ENCODE measurements at regions of chr5 and their contacts with region 1.

Region 1: GRCh38 chr5:62729675-62730074 is 151.1 kb downstream of the LRRC70 start:
- H3K4me3 Mint-ChIP-seq: no peak overlapping the region
- H3K27ac Mint-ChIP-seq: no peak overlapping the region
- H3K4me1 Mint-ChIP-seq: peaks cover 51% of the 10 kb centered on the region
- H3K27me3 Mint-ChIP-seq: no peaks in the 10 kb centered on the region

Region 2: DNA sequence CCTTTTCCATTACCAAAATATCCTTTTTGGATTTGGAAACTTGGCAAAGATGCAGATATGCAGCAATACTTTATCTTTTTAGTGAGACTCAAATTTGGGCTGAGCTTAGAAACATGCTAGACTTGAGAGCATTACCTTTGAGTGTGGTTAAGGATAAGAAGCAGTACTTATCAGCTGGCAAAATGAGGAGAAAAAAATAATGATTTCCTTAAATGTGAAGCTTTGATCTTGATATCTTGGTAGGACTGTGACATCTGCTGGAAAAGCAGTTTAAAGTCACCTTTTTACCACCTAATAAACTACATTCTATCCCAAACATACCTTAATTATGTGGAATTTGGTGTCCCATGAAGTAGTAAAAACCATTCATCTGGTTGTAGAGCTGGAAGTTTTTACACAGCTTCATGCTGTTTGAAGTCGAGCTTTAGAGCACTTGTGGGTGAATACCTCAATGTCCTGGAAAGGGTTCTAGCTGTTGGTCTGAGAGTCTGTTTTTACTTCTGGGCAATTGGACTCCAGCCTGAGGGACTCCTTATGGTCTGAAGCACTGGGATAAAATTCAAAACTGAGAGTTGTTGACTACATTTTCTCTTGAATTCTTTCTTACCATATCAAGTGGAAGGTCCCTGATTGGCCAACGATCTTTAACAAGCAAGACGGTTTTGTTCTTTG is 97.6 kb before region 1 on chr5:
- intact Hi-C with region 1: no loop called
- H3K4me3 Mint-ChIP-seq: no peak overlapping the region
- H3K27ac Mint-ChIP-seq: no peak overlapping the region
- H3K4me1 Mint-ChIP-seq: no peaks in the 10 kb centered on the region
- H3K27me3 Mint-ChIP-seq: no peaks in the 10 kb centered on the region

Region 3: GRCh38 chr5:62689599-62690368 is 39.9 kb before region 1 on chr5:
- intact Hi-C with region 1: loop called (anchors 5 kb)
- H3K4me3 Mint-ChIP-seq: peak overlapping the region; percentile 77
- H3K27ac Mint-ChIP-seq: peak overlapping the region; percentile 96
- H3K4me1 Mint-ChIP-seq: peaks cover 34% of the 10 kb centered on the region
- H3K27me3 Mint-ChIP-seq: no peaks in the 10 kb centered on the region

Region 4: GRCh38 chr5:62762503-62762902 is 32.8 kb after region 1 on chr5:
- intact Hi-C with region 1: no loop called
- H3K4me3 Mint-ChIP-seq: no peak overlapping the region
- H3K27ac Mint-ChIP-seq: no peak overlapping the region
- H3K4me1 Mint-ChIP-seq: no peaks in the 10 kb centered on the region
- H3K27me3 Mint-ChIP-seq: no peaks in the 10 kb centered on the region

Region 5: DNA sequence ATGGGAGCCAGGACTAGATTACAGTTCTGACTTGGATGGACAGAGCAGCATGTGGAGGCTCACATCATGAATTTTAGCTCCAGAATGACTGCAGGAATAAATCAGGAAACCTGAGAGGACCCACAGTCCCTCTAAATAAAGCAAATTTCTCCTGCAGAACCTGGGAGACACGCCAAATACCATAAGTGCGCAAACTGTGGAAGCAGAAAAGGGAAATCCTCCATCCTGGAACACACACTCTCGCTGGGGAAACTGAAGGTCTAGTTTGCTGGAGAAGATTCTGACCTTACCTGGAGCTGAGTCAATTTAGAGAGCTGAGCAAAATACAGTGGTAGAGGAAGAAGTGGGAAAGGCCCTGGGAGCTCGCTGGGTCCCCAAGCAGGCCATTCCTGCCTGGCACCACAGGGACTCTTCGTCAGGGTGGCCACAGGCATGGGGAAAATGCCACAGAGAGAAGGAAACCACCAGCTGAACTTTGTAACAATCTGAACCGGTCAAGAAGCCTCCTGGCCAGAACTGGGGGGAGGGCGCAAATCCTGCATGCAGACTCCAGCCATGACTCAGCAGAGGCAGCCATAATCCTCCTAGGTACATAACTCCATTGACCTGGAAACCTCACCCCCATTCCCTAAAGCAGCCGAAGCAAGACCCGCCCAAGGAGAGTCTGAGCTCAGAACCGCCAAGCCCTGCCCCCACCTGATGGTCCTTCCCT is 239.9 kb after region 1 on chr5:
- intact Hi-C with region 1: no loop called
- H3K4me3 Mint-ChIP-seq: no peak overlapping the region
- H3K27ac Mint-ChIP-seq: no peak overlapping the region
- H3K4me1 Mint-ChIP-seq: no peaks in the 10 kb centered on the region
- H3K27me3 Mint-ChIP-seq: no peaks in the 10 kb centered on the region